AG04449 (cell line): ENCODE measurements at regions of chr22 and their contacts with region 1.

Region 1: DNA sequence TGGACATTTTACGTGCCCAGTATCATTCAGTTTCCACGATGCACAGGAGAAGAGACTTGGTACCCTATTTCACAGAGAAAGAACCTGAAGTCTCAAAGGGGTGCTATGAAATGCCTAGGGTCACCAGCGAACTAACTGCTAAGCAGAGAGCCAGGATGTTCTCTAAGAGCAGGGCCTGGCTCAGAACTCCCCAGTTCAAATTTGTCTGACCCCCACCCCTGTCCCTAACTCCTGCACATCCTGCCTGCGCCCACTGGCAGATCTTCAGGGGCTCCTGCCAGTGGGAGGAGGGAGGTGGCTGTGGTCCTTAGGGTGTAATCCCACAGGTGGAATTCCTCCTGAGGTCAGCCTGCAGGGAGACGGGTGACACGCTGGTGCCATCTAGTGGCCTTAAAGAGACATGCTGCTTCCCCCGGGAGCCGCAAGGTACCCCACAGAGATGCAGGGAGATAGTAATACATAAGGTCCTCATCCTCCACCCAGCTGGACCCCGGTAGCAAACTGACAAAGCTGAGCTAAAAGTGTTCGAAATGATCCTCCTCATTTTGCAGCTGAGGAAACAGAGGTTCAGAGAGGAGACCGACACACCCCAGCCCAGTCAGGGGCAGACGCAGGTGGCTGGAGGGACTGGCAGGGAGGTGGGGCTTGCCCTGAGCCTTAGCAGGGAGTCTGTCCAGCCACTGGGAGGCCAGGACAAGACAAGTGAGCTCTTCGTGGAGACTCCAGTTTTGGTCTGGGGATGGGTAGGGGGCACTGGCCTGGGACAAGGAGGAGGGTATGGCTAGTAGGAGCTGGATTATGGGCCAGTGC is 34.1 kb downstream of the MB start:
- DNase-seq: no peak
- H3K4me3 ChIP-seq: no peak overlapping the region
- CTCF ChIP-seq: peak; percentile 88

Region 2: DNA sequence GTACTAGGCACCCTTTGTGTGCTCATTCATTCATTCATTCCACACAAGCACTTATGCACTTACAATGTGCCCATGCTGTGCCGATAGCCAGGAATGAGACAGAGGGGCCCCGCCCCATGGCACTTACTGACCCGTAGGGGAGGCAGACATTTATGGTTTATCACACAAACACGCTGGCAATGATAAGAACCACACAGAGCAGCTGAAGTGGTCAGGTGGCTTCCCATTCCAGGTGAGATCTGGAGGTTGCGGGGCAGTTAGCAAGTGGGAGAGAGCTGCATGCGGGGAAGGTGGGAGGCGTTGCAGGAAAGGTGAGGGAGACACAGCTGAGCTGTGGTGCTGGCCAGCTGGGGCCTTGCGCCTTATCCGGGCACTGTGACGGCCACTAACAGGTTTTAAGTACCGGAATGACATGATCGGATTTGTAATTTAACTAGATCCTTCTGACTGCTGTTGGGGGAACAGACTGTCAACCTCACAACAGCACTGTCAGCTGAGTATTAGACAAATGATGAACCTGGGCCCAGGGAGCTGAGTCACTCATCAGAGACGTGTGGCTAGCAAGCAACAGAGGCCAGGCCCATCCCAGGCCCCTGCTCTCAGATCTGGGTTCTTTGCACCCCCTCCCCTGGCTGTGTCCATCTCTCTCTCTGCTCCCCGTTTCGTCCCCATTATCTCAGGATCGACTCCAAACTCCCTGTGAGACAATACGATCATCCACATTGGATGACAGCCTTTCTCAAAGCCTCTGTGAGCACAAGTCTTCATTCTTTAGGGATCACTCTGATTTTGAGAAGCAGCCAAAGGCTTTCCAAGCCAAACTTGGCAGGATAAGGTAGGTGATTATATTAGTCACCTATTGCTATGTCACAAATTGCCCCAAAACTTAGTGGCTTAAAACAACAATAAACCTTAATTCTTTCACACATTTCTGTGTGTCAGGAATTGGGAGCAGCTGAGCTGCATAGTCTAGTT is 14.0 kb before region 1 on chr22:
- CTCF ChIA-PET with region 1: interaction called, 53 read pairs
- POLR2A ChIA-PET with region 1: no interaction called
- DNase-seq: peak; percentile 31
- H3K4me3 ChIP-seq: no peak overlapping the region
- CTCF ChIP-seq: no peak

Region 3: DNA sequence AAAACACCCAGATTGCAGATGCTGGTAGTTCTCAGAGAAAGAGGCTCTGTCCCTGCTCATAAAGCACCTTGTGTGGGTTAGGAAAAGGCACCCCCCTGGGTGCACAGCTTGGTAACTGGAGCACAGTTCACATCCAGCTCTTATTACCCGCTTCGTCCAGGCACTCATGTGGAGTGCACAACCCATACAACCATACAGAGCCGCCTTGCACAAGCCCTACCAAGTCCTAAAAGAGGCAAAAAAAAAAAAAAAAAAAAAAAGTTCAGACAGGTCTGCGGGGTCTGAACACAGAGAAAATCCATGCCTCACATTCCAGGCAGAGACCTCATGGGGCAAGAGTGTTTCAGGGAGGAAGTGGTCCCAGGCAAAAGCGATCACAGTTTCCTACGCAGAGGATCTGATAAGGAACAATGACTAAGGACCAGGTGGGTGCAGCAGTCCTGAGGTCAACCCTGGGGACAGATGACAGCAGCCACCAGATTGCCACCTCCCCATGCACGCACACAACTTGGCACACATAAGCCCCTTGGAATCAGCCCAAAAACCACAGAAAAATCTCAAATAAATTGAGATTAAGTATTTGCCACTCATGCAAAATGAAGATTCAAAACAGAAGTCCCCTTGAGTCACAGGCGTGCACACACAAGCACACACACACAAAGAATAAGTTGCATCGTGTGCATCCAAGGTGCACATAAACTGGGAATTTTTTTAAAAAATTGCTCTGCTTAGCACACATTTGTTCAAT is 21.7 kb after region 1 on chr22:
- CTCF ChIA-PET with region 1: interaction called, 14 read pairs
- POLR2A ChIA-PET with region 1: no interaction called
- DNase-seq: no peak
- H3K4me3 ChIP-seq: no peak overlapping the region
- CTCF ChIP-seq: no peak

Region 4: DNA sequence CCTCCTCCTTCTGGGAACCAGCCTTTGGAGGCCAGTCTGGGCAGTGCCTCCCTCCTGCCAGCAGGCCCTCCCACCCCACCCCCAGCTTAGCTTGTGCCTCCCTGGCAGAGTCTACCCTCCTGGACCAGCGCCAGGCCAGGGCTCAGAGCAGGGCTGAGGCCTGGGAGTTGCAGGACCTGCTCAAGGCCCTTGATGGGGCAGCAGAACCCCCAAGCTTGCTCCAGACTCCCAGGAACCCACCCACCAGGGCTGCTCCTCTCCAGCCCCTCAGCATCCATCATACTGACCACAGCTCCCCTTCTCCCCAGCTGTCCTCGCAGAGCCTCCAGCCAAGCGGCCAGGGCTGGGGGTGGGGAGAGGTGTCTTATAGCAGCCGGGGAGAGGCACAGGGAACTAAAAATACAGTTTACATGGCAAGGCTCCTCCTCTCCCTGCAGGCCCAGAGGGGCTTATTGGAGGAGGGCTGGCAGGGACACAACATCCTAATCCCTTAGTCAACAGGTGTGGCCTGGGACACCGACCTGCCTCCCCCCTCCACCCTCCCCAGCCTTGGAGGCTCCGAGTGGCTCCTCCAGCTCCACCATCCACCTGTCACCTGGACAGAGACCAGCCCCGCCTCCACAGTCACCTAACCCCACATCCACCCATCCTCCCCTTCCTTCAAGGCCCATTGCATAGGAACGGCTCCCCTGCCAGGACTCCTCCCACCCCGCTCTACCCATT is 39.3 kb after region 1 on chr22:
- CTCF ChIA-PET with region 1: interaction called, 15 read pairs
- POLR2A ChIA-PET with region 1: no interaction called
- DNase-seq: no peak
- H3K4me3 ChIP-seq: no peak overlapping the region
- CTCF ChIP-seq: no peak